Esophagus muscularis mucosa (tissue), 4 donors: ENCODE measurements at regions of chr12 and their contacts with region 1.

Region 1: GRCh38 chr12:22543246-22544037 is 900 bp downstream of the C2CD5 start:
- DNase-seq: no peak
- H3K4me3 ChIP-seq: peak overlapping the region; percentile 79 to 95 (median 88)
- H3K27ac ChIP-seq: peak overlapping the region; percentile 93 to 97 (median 95)
- H3K4me1 ChIP-seq: peaks cover 31 to 50% (median 45%) of the 10 kb centered on the region in 4 donors
- H3K27me3 ChIP-seq: no peaks in the 10 kb centered on the region
- CTCF ChIP-seq: no peak
- EP300 ChIP-seq: no peak
- POLR2A ChIP-seq: no peak

Region 2: GRCh38 chr12:22624870-22625761 is 81.7 kb after region 1 on chr12 and contains the start of gene ETNK1:
- intact Hi-C with region 1: loop called (anchors 2 kb)
- DNase-seq: peak; percentile 97
- H3K4me3 ChIP-seq: peak within 1 kb of the TSS; percentile 90 to 97 (median 94)
- H3K27ac ChIP-seq: peak within 1 kb of the TSS; percentile 97 to 99 (median 98)
- H3K4me1 ChIP-seq: peaks cover 27 to 45% (median 41%) of the 10 kb centered on the region in 4 donors
- H3K27me3 ChIP-seq: no peaks in the 10 kb centered on the region
- CTCF ChIP-seq: no peak
- EP300 ChIP-seq: peak; percentile 8
- POLR2A ChIP-seq: peak; percentile 84
- total RNA-seq, gene ETNK1: 17.6 to 21.2 (median 19.4) TPM